ENCODE measurements at regions of chr20 and their contacts with region 1.

Region 1: GRCh38 chr20:44885392-44886265 is at the start of gene YWHAB:
- DNase-seq: peak; percentile 89 to 98 (median 95)
- ATAC-seq: peak; percentile 98
- H3K4me3 ChIP-seq: peak within 1 kb of the TSS; percentile 87
- H3K4me3 Mint-ChIP-seq: peak within 1 kb of the TSS; percentile 83 to 98 (median 97)
- H3K27ac ChIP-seq: peak within 1 kb of the TSS; percentile 96
- H3K27ac Mint-ChIP-seq: peak within 1 kb of the TSS; percentile 89 to 99 (median 95)
- H3K4me1 ChIP-seq: peaks cover 39% of the 10 kb centered on the region in 2 donors
- H3K4me1 Mint-ChIP-seq: peaks cover 39 to 79% (median 68%) of the 10 kb centered on the region in 7 donors
- H3K27me3 ChIP-seq: no peaks in the 10 kb centered on the region
- H3K27me3 Mint-ChIP-seq: no peaks in the 10 kb centered on the region
- total RNA-seq, gene YWHAB: 135 to 262 (median 203) TPM

Region 2: DNA sequence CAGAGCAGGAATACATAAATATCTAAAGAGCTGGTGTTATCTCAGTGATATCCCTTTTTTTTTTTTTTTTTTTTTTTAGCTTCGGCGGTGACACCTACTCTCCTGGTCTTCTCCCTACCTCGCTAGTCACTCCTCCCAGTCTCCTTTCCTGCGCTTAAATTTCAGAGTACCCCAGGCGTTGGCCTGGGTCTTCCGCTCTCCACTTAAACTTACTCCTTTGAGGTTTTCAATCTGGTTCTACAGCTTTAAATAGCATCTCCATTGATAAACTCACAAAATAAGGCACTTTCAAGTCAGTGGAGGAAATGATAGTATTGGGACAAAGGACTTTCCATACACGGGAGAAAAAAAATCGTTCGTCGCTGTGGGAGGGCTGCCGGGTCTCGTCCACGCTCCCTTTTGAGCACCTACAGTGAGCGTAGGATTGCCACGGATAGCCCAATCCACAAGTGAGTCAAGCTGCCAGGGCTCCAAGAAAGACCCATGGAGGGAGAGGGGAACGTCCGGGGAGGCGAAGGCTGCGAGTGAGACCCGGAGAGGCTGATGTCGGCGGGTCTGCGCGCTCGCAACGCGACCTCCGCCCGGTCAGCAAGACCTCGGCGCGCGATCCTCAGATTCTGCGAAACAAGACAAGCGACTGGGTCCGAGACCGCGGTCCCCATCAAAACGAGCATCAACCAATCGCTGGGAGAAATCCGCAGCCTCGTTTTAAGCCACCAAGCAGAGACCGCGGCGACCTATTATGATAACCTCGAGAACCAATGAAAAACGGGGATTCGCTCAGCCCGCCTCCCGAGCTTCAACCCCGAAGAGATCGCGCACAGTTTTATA is 1428.6 kb before region 1 on chr20:
- CTCF ChIA-PET with region 1: no interaction called
- POLR2A ChIA-PET with region 1: no interaction called
- intact Hi-C with region 1: loop called (anchors 5 kb)
- DNase-seq: peak in 7 of 9 donors; percentile 73 to 92 (median 91)
- ATAC-seq: peak; percentile 82
- H3K4me3 ChIP-seq: peak overlapping the region; percentile 86
- H3K4me3 Mint-ChIP-seq: peak overlapping the region; percentile 79 to 100 (median 94)
- H3K27ac ChIP-seq: peak overlapping the region; percentile 100
- H3K27ac Mint-ChIP-seq: peak overlapping the region; percentile 96 to 100 (median 99)
- H3K4me1 ChIP-seq: peaks cover 10 to 29% of the 10 kb centered on the region in 2 donors
- H3K4me1 Mint-ChIP-seq: peaks cover 24 to 42% (median 35%) of the 10 kb centered on the region in 7 donors
- H3K27me3 ChIP-seq: no peaks in the 10 kb centered on the region
- H3K27me3 Mint-ChIP-seq: peaks cover 0 to 14% (median 4%) of the 10 kb centered on the region in 5 donors

Region 3: GRCh38 chr20:44521484-44522481 is 363.8 kb before region 1 on chr20 and contains the start of gene SERINC3:
- CTCF ChIA-PET with region 1: no interaction called
- POLR2A ChIA-PET with region 1: interaction called, 3 read pairs
- intact Hi-C with region 1: loop called (anchors 2 to 5 kb)
- DNase-seq: peak; percentile 96 to 99 (median 98)
- ATAC-seq: peak; percentile 99
- H3K4me3 ChIP-seq: peak within 1 kb of the TSS; percentile 95
- H3K4me3 Mint-ChIP-seq: peak within 1 kb of the TSS; percentile 82 to 93 (median 88)
- H3K27ac ChIP-seq: peak within 1 kb of the TSS; percentile 99
- H3K27ac Mint-ChIP-seq: peak within 1 kb of the TSS; percentile 87 to 99 (median 96)
- H3K4me1 ChIP-seq: peaks cover 30 to 34% of the 10 kb centered on the region in 2 donors
- H3K4me1 Mint-ChIP-seq: peaks cover 31 to 68% (median 58%) of the 10 kb centered on the region in 7 donors
- H3K27me3 ChIP-seq: no peaks in the 10 kb centered on the region
- H3K27me3 Mint-ChIP-seq: no peaks in the 10 kb centered on the region
- total RNA-seq, gene SERINC3: 59.7 to 85.3 (median 78.9) TPM

Region 4: GRCh38 chr20:44615169-44615791 is 270.3 kb before region 1 on chr20:
- CTCF ChIA-PET with region 1: no interaction called
- POLR2A ChIA-PET with region 1: no interaction called
- intact Hi-C with region 1: no loop called
- DNase-seq: peak in 1 of 9 donors; percentile 11
- ATAC-seq: no peak
- H3K4me3 ChIP-seq: no peak overlapping the region
- H3K4me3 Mint-ChIP-seq: peak overlapping the region; percentile 18 to 77 (median 70)
- H3K27ac ChIP-seq: peak overlapping the region; percentile 42
- H3K27ac Mint-ChIP-seq: peak overlapping the region; percentile 82 to 98 (median 95)
- H3K4me1 ChIP-seq: peaks cover 11 to 64% of the 10 kb centered on the region in 2 donors
- H3K4me1 Mint-ChIP-seq: peaks cover 46 to 81% (median 68%) of the 10 kb centered on the region in 7 donors
- H3K27me3 ChIP-seq: no peaks in the 10 kb centered on the region
- H3K27me3 Mint-ChIP-seq: no peaks in the 10 kb centered on the region

Region 5: DNA sequence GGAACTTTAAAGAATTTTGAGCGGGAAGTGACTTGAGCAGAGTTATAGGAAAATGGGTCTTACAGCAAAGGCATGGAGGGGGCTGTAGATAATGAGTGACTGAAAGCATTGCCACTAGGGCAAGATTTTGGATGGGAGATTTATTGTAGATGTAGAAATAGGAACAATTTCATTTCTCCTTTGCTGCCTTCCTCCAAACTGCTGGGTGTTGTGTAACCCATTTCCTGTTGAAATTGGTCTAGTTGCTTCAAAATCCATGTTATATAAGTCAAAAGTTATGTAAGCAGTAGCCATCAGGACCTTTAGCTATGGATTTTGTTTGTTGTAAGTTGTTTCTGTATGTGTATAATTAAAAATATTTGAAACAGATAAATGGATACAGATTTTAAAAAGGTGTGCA is 11.0 kb after region 1 on chr20:
- CTCF ChIA-PET with region 1: interaction called, 3 read pairs
- POLR2A ChIA-PET with region 1: interaction called, 8 read pairs
- intact Hi-C with region 1: loop called in 1 of 2 experiments (anchors 1 kb)
- DNase-seq: no peak
- ATAC-seq: no peak
- H3K4me3 ChIP-seq: no peak overlapping the region
- H3K4me3 Mint-ChIP-seq: peak overlapping the region; percentile 13 to 75 (median 44)
- H3K27ac ChIP-seq: peak overlapping the region; percentile 41
- H3K27ac Mint-ChIP-seq: peak overlapping the region; percentile 4 to 91 (median 33)
- H3K4me1 ChIP-seq: peaks cover 51 to 57% of the 10 kb centered on the region in 2 donors
- H3K4me1 Mint-ChIP-seq: peaks cover 66 to 94% (median 79%) of the 10 kb centered on the region in 7 donors
- H3K27me3 ChIP-seq: no peaks in the 10 kb centered on the region
- H3K27me3 Mint-ChIP-seq: no peaks in the 10 kb centered on the region

Region 6: DNA sequence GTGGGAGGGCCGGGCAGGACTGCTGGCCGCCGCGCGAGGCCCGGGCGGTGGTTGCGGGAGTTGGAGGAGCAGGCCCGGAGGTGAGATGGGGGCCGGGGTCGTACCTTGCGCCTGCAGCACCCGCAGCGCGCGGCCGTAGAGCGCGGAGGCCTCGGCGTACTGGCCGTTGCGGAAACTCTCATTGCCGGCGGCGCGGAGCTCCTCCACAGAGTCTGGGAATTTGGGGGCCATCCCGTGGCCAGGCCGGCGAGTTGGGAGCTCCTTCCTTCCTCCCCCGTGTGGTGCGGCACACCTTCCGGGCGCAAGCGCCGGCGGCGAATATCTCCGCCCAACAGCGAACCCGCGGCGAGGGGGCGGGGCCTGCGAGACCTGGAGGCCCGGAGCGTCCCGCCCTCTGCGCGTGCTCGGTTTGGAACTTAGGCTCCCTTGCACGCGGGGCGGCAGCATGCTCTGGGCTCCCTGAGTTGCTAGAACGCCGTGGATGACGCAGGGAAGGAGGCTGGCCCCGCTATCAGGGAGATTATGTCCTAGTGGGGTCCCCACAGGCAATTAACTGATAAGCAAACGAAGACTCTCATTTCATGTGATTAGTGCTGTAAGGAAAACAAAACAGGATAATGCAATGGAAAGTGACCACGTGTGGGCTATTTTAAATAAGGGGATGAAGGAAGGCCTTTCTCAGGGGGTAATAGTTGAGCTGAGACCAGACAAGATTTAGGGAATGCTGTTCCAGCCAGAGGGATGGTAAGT is 74.6 kb after region 1 on chr20 and contains the start of gene TOMM34:
- CTCF ChIA-PET with region 1: no interaction called
- POLR2A ChIA-PET with region 1: interaction called, 6 read pairs
- intact Hi-C with region 1: loop called in 1 of 2 experiments (anchors 1 kb)
- DNase-seq: peak; percentile 87 to 98 (median 91)
- ATAC-seq: peak; percentile 97
- H3K4me3 ChIP-seq: peak within 1 kb of the TSS; percentile 71
- H3K4me3 Mint-ChIP-seq: peak within 1 kb of the TSS; percentile 84 to 100 (median 96)
- H3K27ac ChIP-seq: peak within 1 kb of the TSS; percentile 75
- H3K27ac Mint-ChIP-seq: peak within 1 kb of the TSS; percentile 79 to 98 (median 93)
- H3K4me1 ChIP-seq: peaks cover 22 to 24% of the 10 kb centered on the region in 2 donors
- H3K4me1 Mint-ChIP-seq: peaks cover 26 to 71% (median 58%) of the 10 kb centered on the region in 7 donors
- H3K27me3 ChIP-seq: no peaks in the 10 kb centered on the region
- H3K27me3 Mint-ChIP-seq: no peaks in the 10 kb centered on the region
- total RNA-seq, gene TOMM34: 7.0 to 22.5 (median 8.6) TPM

Region 7: GRCh38 chr20:45293041-45294002 is 407.7 kb after region 1 on chr20:
- CTCF ChIA-PET with region 1: no interaction called
- POLR2A ChIA-PET with region 1: no interaction called
- intact Hi-C with region 1: loop called in 1 of 2 experiments (anchors 5 kb)
- DNase-seq: peak; percentile 33 to 89 (median 68)
- ATAC-seq: peak; percentile 93
- H3K4me3 ChIP-seq: peak overlapping the region; percentile 54
- H3K4me3 Mint-ChIP-seq: peak overlapping the region; percentile 57 to 83 (median 78)
- H3K27ac ChIP-seq: no peak overlapping the region
- H3K27ac Mint-ChIP-seq: no peak overlapping the region
- H3K4me1 ChIP-seq: peaks cover 4 to 14% of the 10 kb centered on the region in 2 donors
- H3K4me1 Mint-ChIP-seq: peaks cover 4 to 21% (median 11%) of the 10 kb centered on the region in 7 donors
- H3K27me3 ChIP-seq: peaks cover 0 to 10% of the 10 kb centered on the region in 2 donors
- H3K27me3 Mint-ChIP-seq: peaks cover 31 to 48% (median 38%) of the 10 kb centered on the region in 5 donors

Region 8: DNA sequence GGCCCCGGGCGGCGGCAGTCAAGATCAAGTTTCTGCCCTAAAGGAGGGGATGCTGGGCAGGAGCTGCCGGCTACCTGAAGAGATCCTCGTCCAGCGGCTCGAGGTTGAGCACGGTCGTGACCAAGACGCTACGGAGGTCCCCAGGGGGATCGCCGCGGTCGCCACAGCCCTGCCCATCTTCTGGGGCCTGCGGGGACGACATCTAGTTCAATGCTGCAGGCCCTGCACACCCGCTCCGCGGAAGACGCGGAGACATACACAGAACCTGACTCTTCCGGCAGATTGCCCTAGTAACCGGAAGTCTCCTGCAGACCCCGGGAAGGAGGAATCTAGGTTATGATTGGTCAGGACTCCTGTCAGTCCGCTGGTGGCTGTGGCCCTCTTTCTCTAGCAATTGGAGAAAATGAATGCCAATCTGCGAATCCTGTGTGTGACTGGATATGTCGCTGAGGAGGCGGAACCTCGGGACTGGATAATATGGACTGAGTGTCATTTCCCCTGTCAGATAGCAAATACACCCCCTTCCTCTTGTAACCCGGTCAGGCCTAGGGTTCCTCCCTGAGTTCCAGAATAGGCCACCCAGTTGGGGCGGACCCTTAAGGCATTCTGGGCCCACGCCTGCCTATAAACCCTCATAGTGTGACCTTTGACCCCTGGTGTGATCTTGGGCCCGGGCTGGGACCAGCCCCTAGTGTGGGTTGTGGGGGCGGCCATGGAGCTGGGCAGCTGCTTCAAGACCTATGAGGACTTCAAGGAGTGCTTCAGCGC is 971.7 kb after region 1 on chr20 and contains the starts of genes ACOT8 and ZSWIM3:
- CTCF ChIA-PET with region 1: no interaction called
- POLR2A ChIA-PET with region 1: no interaction called
- intact Hi-C with region 1: loop called in 1 of 2 experiments (anchors 5 kb)
- DNase-seq: peak; percentile 62 to 100 (median 97)
- ATAC-seq: peak; percentile 99
- H3K4me3 ChIP-seq: peak within 1 kb of the TSS; percentile 94
- H3K4me3 Mint-ChIP-seq: peak within 1 kb of the TSS; percentile 95 to 98 (median 96)
- H3K27ac ChIP-seq: peak within 1 kb of the TSS; percentile 95
- H3K27ac Mint-ChIP-seq: peak within 1 kb of the TSS; percentile 96 to 99 (median 98)
- H3K4me1 ChIP-seq: peaks cover 16 to 26% of the 10 kb centered on the region in 2 donors
- H3K4me1 Mint-ChIP-seq: peaks cover 23 to 76% (median 63%) of the 10 kb centered on the region in 7 donors
- H3K27me3 ChIP-seq: no peaks in the 10 kb centered on the region
- H3K27me3 Mint-ChIP-seq: no peaks in the 10 kb centered on the region
- total RNA-seq, gene ACOT8: 20.5 to 35.5 (median 29.2) TPM
- total RNA-seq, gene ZSWIM3: 1.3 to 6.8 (median 6.0) TPM

Measured in naive thymus-derived CD4-positive, alpha-beta T cell (primary cell).